ENCODE measurements at regions of chr12 and their contacts with region 1.

Region 1: DNA sequence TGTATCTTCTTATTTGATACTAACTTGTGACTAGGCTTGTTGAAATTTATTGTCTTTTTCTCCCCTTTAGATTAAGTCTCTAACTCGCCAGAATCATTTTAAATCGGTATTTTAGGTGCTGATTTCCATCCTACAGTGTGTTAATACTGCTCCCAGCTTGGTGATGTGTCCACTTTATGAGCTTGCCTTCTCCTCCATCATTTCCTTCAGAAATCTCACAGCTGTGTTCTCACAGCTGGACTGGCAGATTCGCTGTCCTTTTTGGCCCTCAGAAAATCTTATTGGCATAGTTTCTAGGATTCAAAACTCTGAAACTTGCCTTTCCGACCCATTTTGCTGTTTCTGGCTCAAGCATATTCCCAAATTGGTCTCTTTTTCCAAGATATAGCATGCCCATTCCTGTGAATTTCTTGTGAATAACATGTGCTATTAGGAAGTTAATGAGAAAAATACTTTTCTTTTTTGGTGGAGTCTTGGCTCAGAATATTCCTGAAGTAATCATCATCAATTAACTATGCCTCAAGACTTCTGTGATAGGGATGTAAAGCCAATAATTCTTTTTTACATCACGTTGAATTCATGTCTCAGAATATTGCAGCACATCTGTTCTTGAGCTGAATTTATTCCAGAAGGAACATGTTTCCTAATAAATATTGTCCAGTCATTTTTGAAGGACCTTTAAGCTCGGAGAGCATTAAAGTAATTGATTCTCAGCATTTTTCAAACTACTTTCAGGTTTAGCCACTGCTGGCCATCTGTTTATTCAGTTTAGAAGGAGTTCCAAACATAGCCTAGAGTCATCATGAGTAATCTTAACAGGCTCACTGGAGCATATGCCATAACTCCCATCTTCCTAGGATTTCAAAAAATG is 50.0 kb upstream of the USP44 start:
- DNase-seq: no peak
- ATAC-seq: no peak
- H3K4me3 Mint-ChIP-seq: no peak overlapping the region
- H3K27ac Mint-ChIP-seq: no peak overlapping the region
- H3K4me1 Mint-ChIP-seq: no peaks in the 10 kb centered on the region
- H3K27me3 Mint-ChIP-seq: peaks cover 15% of the 10 kb centered on the region
- CTCF ChIP-seq: no peak

Region 2: GRCh38 chr12:95390192-95390591 is 211.1 kb before region 1 on chr12:
- CTCF ChIA-PET with region 1: no interaction called
- POLR2A ChIA-PET with region 1: interaction called, 11 read pairs
- intact Hi-C with region 1: no loop called
- DNase-seq: no peak
- ATAC-seq: no peak
- H3K4me3 Mint-ChIP-seq: peak overlapping the region; percentile 5
- H3K27ac Mint-ChIP-seq: no peak overlapping the region
- H3K4me1 Mint-ChIP-seq: peaks cover 16% of the 10 kb centered on the region
- H3K27me3 Mint-ChIP-seq: no peaks in the 10 kb centered on the region
- CTCF ChIP-seq: no peak

Region 3: DNA sequence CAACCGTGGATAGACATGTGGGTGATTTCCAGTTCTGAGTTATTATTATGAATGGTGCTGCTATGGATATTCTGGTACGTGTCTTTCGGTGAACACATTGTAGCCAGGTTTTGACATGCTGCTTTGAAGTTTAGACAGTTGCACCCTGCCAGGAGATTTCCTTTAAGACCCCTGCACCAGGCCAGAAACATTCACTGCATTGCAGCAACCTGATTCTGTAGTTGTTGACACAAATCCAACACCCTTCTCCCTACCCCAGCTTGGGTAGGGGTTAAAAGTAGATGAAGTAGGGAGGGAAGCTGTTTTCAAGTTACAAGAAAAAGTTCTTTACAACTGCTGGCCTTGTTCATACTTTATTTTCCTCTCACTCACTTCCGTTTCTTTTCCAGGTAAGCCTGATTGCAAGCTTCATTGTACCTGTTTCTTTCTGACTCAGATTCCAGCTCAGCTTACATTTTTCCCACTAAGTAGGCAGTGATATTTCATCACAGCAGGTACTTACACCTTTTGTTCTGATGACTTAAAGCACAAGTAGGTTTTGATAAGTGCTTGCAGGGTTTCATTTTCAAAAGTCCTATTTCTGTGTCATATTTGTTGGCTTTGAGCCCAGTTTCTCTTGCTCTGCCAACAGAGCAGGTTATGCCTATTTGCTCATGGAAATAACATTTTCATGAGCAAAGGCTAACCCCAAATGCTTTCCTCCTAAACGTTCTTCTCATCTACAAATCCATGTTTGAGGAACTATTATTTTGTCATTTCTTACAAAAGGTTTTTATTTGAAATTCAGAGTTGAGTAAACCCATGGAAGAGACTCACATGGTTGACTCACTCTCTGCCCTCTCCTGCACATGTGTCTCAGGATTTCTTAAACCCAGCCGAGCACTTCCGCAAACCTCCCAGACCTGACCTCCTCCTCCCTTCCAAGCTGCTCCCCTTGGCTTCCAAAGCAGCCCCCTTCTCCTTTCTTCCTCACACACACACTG is 446.2 kb after region 1 on chr12:
- CTCF ChIA-PET with region 1: no interaction called
- POLR2A ChIA-PET with region 1: no interaction called
- intact Hi-C with region 1: no loop called
- DNase-seq: no peak
- ATAC-seq: peak; percentile 19
- H3K4me3 Mint-ChIP-seq: peak overlapping the region; percentile 53
- H3K27ac Mint-ChIP-seq: peak overlapping the region; percentile 88
- H3K4me1 Mint-ChIP-seq: peaks cover 69% of the 10 kb centered on the region
- H3K27me3 Mint-ChIP-seq: no peaks in the 10 kb centered on the region
- CTCF ChIP-seq: no peak